ENCODE measurements at regions of chr11 and their contacts with region 1.

Region 1: DNA sequence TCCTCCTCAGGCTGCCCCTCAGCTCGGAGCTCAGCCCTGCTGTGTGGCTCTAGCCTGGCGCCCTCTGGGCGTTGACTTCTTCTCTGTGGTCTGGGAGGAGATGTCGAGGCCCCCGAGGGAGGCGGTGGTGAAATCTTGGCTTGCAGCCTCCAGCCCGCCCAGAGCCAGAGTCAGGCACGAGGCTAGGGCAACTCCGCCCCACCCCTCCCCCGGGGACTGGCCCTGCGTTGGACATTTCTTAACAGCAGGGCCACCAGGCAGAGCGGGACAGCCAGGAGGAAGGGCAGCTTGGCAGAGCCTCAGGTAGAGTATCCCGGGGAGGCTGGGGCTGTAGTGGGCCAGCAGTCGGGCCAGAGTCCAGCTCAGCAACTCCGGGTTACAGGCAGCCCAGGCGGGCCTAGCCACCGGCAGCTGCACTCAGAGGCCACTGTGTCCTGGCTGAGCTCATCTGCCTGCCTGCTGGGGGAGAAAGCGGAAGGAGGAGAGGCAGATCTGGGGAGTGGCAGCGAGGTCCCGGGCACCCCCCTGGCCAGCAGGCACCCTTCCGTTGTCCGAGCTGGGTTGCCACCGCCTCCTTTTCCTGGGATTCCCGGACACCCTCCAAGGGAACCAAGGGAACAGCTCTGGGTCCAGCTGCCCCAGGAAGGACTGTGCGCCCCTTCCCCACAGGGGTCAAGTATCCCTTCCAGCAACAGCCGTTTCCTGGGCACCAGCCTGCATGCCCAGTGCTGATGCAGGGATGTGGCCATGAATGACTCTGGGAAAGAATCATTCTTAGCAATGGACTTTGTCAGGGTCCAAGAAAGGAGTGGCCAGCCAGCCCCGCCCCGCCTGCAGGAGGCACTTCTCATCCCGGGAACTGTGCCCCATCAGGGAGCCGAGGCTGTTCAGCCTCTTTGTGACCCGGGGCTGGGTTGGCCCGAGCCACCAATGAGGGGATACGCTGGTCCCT is at the start of gene ALDH3B1:
- DNase-seq: peak; percentile 74 to 97
- H3K4me3 ChIP-seq: peak within 1 kb of the TSS; percentile 35 to 60
- H3K27ac ChIP-seq: peak within 1 kb of the TSS; percentile 82 to 91
- H3K4me1 ChIP-seq: peaks cover 9 to 32% of the 10 kb centered on the region in 2 donors
- H3K27me3 ChIP-seq: no peaks in the 10 kb centered on the region
- CTCF ChIP-seq: no peak
- total RNA-seq, gene ALDH3B1: 42.8 TPM

Region 2: DNA sequence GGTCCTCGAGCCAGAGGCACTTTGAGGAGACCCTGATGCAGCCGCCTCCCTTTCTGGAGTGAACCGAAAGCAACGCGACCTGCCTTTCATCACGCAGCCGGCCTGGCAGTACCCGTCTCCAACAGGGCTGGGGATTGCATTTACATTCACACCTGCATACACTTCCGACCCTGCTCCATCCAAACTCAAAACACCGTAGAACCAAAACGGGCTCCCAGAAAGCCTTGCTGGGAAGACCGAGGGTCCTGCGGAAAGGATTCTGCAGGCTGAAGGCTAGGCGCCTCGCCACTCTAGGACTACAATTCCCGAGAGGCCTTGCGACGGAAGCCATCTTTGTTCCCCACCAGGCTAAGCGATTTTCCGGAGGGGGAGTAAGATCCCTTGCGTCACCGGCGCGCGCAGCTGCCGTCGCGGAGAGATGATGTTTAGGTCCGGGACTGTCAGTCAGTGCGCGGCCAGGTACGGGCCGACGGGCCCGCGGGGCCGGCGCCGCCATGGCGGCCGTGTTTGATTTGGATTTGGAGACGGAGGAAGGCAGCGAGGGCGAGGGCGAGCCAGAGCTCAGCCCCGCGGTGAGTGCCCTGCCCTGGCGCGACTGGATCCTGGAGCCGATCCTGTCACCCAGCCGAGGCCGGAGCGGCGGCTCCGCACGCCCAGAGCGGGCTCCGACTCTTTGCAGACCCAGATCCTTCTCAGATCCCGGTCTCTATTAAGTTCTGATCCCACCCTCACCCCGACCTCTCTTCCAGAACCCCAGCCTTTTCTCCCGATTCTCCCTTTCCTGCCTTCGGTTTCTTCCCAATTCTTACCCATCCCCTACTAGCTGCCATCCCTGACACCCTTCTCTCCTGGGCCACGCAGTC is 582.1 kb before region 1 on chr11 and contains the start of gene RPS6KB2:
- intact Hi-C with region 1: no loop called
- DNase-seq: peak; percentile 96 to 99
- H3K4me3 ChIP-seq: peak within 1 kb of the TSS; percentile 75 to 94
- H3K27ac ChIP-seq: peak within 1 kb of the TSS; percentile 86 to 91
- H3K4me1 ChIP-seq: peaks cover 6 to 16% of the 10 kb centered on the region in 2 donors
- H3K27me3 ChIP-seq: no peaks in the 10 kb centered on the region
- CTCF ChIP-seq: no peak
- total RNA-seq, gene RPS6KB2: 72.3 TPM

Region 3: DNA sequence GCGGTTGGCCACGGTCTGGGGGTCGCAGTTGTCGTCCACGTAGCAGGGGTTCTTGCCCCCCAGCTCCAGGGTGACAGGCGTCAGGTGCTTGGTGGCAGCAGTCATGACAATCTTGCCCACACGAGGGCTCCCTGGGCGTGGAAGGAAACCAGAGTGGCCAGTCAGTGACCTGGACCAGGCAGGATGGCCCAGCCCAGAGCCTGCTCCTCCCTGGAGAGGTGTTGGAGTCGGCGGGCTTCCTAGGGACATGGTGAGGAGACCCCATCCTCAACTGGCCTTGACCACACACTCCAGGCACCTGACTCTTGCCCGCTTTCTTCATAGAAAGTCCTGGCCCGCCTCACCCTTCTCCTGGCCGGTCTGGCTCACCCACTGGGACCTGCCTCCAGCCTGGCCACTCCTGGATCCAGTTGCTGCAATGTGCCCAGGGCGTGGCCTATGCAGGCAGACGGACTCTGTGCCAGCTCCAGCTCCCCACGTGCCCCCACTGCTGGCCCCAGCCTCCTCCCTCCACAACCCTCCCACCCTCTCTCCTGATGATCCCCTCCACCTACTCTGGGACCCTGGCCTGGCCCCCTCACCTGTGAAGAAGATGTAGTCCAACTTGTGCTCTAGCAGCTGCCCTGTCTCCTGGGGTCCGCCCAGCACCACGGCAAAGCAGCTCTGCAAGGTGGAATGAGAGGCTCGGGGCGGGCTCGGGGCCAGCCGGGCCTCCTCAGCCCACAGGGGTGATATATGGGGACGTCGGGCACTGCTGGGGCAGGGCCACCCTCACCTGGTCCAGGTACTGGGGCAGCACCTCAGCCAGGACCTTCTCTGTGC is 344.6 kb before region 1 on chr11:
- intact Hi-C with region 1: no loop called
- DNase-seq: no peak
- H3K4me3 ChIP-seq: no peak overlapping the region
- H3K27ac ChIP-seq: no peak overlapping the region
- H3K4me1 ChIP-seq: no peaks in the 10 kb centered on the region
- H3K27me3 ChIP-seq: no peaks in the 10 kb centered on the region
- CTCF ChIP-seq: no peak

Region 4: DNA sequence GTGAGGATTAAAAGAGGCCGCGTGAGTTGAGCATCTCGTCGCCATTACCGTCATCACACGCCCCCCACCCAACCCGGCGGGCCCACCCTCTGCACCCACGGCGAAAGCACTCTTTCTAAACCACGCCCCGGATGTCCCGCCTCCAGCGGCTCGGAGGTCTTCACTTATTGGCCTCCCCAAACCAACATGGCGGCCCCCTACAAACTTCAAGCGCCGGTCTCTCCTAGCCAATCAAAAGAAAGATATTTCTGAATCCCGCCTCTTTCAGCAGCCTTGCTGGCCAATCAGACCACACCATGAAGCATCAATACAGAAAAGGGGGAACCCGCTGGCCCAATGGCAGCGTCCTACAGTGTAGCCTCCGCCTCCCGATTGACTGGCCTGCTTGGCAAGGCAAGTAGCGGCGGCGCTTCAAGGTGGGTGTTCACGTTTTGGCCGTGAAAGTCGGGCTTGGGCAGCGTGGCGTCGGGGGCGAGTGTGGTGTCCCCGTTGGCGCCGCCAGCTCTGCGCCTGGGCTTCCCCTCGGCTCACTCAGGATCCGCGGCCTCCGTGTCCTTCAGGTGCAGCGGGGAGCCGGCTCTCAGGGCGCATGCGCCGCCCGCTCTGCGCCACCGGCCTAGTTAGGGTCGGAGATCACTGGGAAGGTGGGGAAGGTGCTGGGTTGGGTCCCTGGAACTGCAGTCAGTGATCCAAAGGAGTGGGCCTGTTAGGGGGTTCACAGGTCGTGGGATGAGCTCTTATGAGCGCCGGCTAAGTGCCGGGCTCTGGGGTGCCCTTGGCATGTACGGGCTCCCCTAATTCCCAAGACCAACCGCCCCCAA is 20.2 kb after region 1 on chr11 and contains the start of gene NDUFS8:
- intact Hi-C with region 1: loop called (anchors 2 kb)
- DNase-seq: peak; percentile 95 to 99
- H3K4me3 ChIP-seq: peak within 1 kb of the TSS; percentile 75 to 96
- H3K27ac ChIP-seq: peak within 1 kb of the TSS; percentile 73 to 77
- H3K4me1 ChIP-seq: peaks cover 9 to 17% of the 10 kb centered on the region in 2 donors
- H3K27me3 ChIP-seq: no peaks in the 10 kb centered on the region
- CTCF ChIP-seq: no peak
- total RNA-seq, gene NDUFS8: 316 TPM

Region 5: GRCh38 chr11:68038718-68039525 is 28.6 kb after region 1 on chr11 and contains the start of gene TCIRG1:
- intact Hi-C with region 1: loop called (anchors 1 kb)
- DNase-seq: peak; percentile 73 to 96
- H3K4me3 ChIP-seq: peak within 1 kb of the TSS; percentile 63 to 78
- H3K27ac ChIP-seq: peak within 1 kb of the TSS; percentile 90 to 91
- H3K4me1 ChIP-seq: peaks cover 14 to 30% of the 10 kb centered on the region in 2 donors
- H3K27me3 ChIP-seq: no peaks in the 10 kb centered on the region
- CTCF ChIP-seq: peak in 2 of 3 experiments; percentile 8 to 79
- total RNA-seq, gene TCIRG1: 385 TPM

Region 6: DNA sequence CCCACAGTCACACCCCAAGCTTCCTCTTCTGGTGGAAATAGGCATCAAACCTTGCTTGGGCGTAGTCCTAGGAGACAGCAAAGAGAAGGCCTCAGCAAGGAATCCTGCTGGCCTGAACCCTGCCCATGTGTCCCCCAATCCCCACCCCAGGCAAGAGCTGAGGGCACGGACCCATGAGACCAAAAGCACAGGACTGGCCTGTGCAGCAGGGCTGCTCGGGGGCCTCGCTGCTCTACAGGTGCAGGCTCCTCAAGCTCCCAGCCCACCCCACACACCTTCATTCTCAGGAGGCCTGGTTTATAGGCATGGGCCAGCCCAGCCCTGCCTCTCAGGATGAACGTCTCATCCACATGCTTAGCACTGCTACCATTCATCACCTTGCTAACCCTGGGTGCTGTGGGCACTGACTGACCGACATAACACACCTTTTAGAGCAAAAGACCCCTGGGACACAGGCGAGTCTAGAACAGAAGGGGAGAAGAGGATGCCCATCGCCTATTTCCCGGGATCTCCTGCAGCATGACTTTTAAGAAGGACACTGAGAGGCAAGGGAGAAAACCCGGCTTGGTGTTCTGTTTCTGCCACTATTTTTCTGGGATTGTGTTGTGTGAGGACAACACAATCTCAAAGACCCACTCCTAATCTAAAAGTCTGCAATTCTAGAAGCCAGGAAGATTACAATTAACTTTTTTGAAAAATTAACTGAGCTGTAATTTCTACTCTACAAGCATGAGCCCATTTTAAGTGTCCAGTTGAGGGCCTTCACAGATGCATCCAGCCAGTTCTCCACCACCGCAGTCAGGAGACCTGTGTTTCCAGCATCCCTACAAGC is 43.8 kb after region 1 on chr11:
- intact Hi-C with region 1: no loop called
- DNase-seq: no peak
- H3K4me3 ChIP-seq: no peak overlapping the region
- H3K27ac ChIP-seq: no peak overlapping the region
- H3K4me1 ChIP-seq: no peaks in the 10 kb centered on the region
- H3K27me3 ChIP-seq: no peaks in the 10 kb centered on the region
- CTCF ChIP-seq: no peak

Region 7: GRCh38 chr11:68242616-68243015 is 232.2 kb after region 1 on chr11:
- intact Hi-C with region 1: no loop called
- DNase-seq: peak in 1 of 2 donors; percentile 2
- H3K4me3 ChIP-seq: no peak overlapping the region
- H3K27ac ChIP-seq: no peak overlapping the region
- H3K4me1 ChIP-seq: no peaks in the 10 kb centered on the region
- H3K27me3 ChIP-seq: no peaks in the 10 kb centered on the region
- CTCF ChIP-seq: no peak

Measured in ascending aorta (tissue), 2 donors.